ENCODE measurements at regions of chr1 and their contacts with region 1.

Region 1: DNA sequence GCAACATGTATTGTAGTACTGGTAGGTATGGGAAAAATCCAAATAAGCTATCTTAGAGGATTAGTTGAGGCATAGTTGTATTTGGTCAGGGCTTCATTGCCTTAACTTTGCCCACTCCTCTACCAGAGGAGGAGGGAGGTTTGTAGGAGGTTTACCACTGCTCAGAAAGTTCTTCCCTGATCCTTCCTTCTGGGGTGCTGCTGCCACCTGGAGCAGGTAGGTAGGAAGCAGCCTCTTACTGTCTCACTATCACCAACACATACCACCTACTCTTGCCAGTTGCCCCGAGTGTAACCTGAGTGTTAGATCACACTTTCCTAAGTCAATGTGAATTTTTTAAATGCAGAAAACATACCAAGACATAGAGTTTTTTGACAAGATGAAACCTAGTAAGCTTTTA is 24.1 kb upstream of the ZSWIM5 start:
- DNase-seq: peak; percentile 40
- ATAC-seq: peak; percentile 56
- H3K4me3 ChIP-seq: no peak overlapping the region
- H3K27ac ChIP-seq: no peak overlapping the region
- H3K4me1 ChIP-seq: no peaks in the 10 kb centered on the region
- H3K27me3 ChIP-seq: no peaks in the 10 kb centered on the region
- CTCF ChIP-seq: peak; percentile 45; the same call in 1 of the 2 replicates

Region 2: DNA sequence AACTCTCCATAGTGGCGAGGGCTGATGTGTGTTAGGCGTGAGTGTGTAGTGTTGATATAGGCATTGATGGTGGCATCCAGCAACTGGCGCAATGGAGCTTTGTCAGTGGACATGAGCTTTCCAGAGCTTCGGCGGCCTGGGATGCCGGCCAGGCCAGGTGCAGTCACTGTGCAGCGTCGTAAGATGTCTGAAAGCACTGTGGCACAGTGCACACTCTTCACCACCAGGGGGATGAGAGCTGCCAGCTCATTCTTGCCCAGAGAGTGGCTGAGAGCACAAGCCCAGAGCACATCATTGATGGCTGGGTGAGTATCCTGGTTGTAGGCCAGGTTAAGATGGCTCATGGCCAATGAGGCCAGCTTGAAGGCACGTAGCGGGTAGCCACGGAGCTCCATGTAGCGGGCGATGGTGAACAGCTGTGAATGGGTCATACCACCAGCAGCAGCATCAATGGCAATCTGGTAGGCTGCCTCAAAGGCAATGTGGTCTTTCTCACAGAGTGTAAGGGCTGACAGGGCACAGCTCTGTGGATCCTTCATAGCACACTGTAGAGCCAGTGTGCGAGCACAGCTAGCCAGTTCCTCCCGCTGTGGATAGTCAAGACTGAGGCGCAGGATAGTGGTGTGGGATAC is 211.8 kb before region 1 on chr1:
- CTCF ChIA-PET with region 1: no interaction called
- POLR2A ChIA-PET with region 1: no interaction called
- intact Hi-C with region 1: loop called (anchors 1 kb)
- DNase-seq: peak; percentile 87
- ATAC-seq: peak; percentile 94
- H3K4me3 ChIP-seq: no peak overlapping the region
- H3K27ac ChIP-seq: no peak overlapping the region
- H3K4me1 ChIP-seq: 0 out of 2 replicates have a peak, but pooled peaks cover 2% of the 10 kb centered on the region
- H3K27me3 ChIP-seq: no peaks in the 10 kb centered on the region
- CTCF ChIP-seq: peak; percentile 84